Activated B cell treated with CpG ODN at 0.5 μM for 24 hours (primary cell): ENCODE measurements at regions of chr3 and their contacts with region 1.

Region 1: DNA sequence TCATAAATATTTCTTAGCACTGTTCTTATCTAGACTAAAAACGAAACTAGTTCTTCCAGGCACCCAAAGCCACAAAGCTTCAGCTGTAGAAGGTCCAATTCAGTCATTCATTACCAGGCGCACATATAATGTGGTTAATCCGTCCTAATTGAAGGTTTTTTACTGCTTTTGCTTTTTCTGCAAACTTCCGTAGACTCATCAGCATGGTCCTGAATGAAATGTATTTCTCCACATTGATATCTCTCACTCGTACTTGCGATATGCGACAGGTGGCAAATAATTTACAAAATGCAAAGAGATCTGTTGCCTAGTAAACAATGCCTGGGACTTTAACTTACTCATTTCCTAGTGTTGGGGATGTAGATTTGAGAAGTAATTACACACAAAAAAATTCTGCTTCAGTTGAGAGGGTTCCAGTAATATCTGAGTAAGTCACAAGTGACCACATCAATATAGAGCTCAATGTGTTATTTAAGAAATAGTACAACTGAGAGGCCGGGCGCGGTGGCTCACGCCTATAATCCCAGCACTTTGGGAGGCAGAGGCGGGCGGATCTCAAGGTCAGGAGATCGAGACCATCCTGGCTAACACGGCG is 75.0 kb upstream of the MBNL1 start:
- DNase-seq: no peak
- ATAC-seq: peak; percentile 53
- H3K4me3 Mint-ChIP-seq: peak overlapping the region; percentile 73
- H3K27ac Mint-ChIP-seq: peak overlapping the region; percentile 78
- H3K4me1 Mint-ChIP-seq: peaks cover 77% of the 10 kb centered on the region
- H3K27me3 Mint-ChIP-seq: no peaks in the 10 kb centered on the region
- CTCF ChIP-seq: no peak

Region 2: GRCh38 chr3:151384741-151385174 is 809.0 kb before region 1 on chr3 and contains the start of gene P2RY12:
- CTCF ChIA-PET with region 1: no interaction called
- POLR2A ChIA-PET with region 1: no interaction called
- intact Hi-C with region 1: loop called (anchors 10 kb)
- DNase-seq: no peak
- ATAC-seq: peak; percentile 29
- H3K4me3 Mint-ChIP-seq: peak within 1 kb of the TSS; percentile 79
- H3K27ac Mint-ChIP-seq: peak within 1 kb of the TSS; percentile 97
- H3K4me1 Mint-ChIP-seq: peaks cover 76% of the 10 kb centered on the region
- H3K27me3 Mint-ChIP-seq: no peaks in the 10 kb centered on the region
- CTCF ChIP-seq: no peak
- total RNA-seq, gene P2RY12: 0.58 and 0.64 TPM in 2 replicates

Region 3: DNA sequence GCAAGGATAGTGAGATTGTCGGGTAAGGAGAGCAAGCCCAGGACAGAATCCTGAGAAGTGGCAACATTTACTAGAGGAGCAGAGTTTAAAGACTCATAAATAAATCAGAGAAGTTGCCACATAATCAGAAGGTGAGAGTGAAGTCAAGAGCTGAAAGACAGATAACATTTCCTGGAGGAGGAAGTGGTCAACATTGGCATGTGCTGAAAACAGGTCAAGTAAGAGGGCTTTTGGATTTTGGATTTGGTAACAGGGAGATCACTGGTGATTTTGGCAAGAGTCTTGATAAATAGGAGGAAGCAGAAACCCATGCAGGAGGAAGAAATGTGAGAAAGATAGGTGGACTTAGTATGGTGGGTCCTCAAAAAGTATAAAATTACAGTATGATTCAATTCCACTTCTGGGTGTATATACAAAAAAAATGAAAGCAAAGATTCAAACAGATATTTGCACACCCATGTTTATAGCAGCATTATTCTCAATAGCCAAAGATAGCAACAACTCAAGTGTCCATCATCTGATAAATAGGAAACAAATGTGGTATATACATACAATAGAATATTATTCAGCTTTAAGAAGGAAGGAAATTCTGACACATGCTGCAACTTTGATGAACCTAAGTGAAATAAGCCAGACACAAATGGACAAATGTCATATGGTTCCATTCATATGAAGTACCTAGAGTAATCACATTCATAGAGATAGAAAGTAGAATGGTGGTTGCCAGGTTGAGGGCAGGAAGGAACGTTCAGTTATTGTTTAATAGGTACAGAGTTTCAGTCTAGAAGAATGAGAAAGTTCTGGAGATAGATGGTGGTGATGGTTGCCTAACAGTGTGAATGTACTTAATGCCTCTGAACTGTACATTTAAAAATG is 47.6 kb after region 1 on chr3:
- CTCF ChIA-PET with region 1: interaction called, 5 read pairs
- POLR2A ChIA-PET with region 1: interaction called, 150 read pairs
- intact Hi-C with region 1: loop called (anchors 2 kb)
- DNase-seq: no peak
- ATAC-seq: no peak
- H3K4me3 Mint-ChIP-seq: peak overlapping the region; percentile 62
- H3K27ac Mint-ChIP-seq: peak overlapping the region; percentile 90
- H3K4me1 Mint-ChIP-seq: peaks cover 77% of the 10 kb centered on the region
- H3K27me3 Mint-ChIP-seq: no peaks in the 10 kb centered on the region
- CTCF ChIP-seq: no peak

Region 4: DNA sequence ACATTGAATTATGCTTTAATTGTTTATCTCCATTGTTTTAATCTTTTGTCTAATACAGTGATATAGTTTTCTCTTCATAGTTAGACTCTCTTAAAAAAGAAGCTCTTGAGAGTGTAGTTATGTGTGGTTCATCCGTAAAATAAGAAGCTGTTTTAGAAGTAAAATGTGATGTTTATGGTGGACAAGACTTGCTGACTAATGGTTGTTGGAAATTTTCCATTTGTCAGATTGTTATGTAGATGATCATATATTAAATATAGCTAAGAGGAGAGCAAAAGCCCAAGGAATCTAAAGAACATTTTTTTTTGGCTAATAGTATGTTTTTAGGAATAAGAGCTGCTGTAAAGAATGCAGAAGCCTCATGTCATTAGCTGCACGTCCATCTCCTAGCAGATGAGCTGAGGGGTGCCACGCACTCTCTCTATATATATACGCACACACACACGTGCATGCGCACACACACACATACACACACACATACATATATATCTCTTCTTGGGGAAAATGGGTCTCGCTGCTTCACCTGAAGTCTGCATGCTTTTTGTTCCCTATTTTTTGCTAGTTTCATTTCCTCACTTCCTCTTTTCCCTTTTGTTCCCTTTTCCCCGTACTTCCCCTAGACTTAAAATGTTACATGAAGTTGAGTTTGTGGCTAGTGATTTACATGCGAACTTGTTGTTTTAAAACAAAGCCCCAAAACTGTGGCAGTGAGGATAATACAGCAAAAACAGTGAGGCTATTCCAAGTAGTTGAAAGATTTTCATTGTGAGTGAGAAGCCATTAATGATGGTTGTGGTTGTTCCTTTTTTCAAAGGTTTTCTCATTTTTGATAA is 182.8 kb after region 1 on chr3:
- CTCF ChIA-PET with region 1: no interaction called
- POLR2A ChIA-PET with region 1: interaction called, 6 read pairs
- intact Hi-C with region 1: loop called (anchors 2 kb)
- DNase-seq: peak; percentile 29
- ATAC-seq: peak; percentile 91
- H3K4me3 Mint-ChIP-seq: peak overlapping the region; percentile 51
- H3K27ac Mint-ChIP-seq: peak overlapping the region; percentile 84
- H3K4me1 Mint-ChIP-seq: peaks cover 83% of the 10 kb centered on the region
- H3K27me3 Mint-ChIP-seq: no peaks in the 10 kb centered on the region
- CTCF ChIP-seq: no peak